ENCODE measurements at regions of chr3 and their contacts with region 1.

Region 1: DNA sequence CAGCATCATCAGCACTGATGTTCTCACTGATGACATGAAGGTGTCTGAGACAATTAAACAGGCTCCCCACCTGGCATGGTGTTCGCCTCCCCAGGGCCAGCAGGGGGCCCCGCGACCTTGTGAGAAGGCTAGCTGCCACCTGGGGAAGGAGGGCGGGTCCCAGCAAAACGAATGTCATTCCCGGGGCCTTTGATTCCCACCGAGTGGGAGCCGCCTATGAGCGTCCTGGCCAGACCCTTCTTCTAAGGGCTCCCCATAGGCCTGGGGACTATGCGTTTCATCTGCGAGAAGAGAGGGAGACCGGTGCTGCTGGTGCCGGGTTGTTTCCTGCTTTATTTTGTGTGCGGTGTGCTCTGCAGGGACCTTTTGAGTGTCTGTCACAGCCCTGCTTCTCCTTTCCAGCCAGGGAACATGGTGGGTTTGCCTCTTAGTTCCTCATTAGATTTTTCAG is 20.5 kb upstream of the MINDY4B start:
- DNase-seq: peak; percentile 65 to 79
- H3K4me3 ChIP-seq: no peak overlapping the region
- H3K4me3 Mint-ChIP-seq: peak overlapping the region; percentile 24
- H3K27ac Mint-ChIP-seq: no peak overlapping the region
- H3K4me1 ChIP-seq: no peaks in the 10 kb centered on the region
- H3K4me1 Mint-ChIP-seq: peaks cover 6% of the 10 kb centered on the region
- H3K27me3 ChIP-seq: no peaks in the 10 kb centered on the region
- H3K27me3 Mint-ChIP-seq: peaks cover 14% of the 10 kb centered on the region
- CTCF ChIP-seq: peak; percentile 80 to 86

Region 2: GRCh38 chr3:150870396-150870795 is 55.4 kb before region 1 on chr3:
- CTCF ChIA-PET with region 1: no interaction called
- POLR2A ChIA-PET with region 1: no interaction called
- intact Hi-C with region 1: no loop called
- DNase-seq: no peak
- H3K4me3 ChIP-seq: no peak overlapping the region
- H3K4me3 Mint-ChIP-seq: no peak overlapping the region
- H3K27ac Mint-ChIP-seq: no peak overlapping the region
- H3K4me1 ChIP-seq: no peaks in the 10 kb centered on the region
- H3K4me1 Mint-ChIP-seq: no peaks in the 10 kb centered on the region
- H3K27me3 ChIP-seq: no peaks in the 10 kb centered on the region
- H3K27me3 Mint-ChIP-seq: peaks cover 11% of the 10 kb centered on the region
- CTCF ChIP-seq: no peak

Region 3: DNA sequence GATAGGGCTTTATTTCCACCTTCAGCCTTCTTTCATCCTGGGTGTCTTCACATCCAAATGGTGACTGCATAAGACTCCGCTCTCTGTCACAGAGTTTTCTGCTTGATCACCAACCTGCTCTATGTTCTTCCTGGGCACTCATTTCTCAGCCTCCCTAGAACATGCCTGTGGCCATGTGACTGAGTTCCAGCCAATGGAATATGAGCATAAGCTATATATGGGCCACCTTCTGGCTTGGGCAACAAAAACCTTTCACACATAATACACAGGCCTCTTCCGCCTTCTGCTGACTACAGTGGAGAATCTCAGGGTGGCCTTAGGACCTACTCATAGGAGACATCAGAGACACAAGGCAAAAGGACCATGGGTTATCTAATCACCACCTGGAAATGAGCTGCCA is 108.5 kb after region 1 on chr3:
- CTCF ChIA-PET with region 1: interaction called, 4 read pairs
- POLR2A ChIA-PET with region 1: no interaction called
- intact Hi-C with region 1: loop called (anchors 5 kb)
- DNase-seq: peak in 1 of 2 experiments; percentile 23
- H3K4me3 ChIP-seq: no peak overlapping the region
- H3K4me3 Mint-ChIP-seq: no peak overlapping the region
- H3K27ac Mint-ChIP-seq: no peak overlapping the region
- H3K4me1 ChIP-seq: no peaks in the 10 kb centered on the region
- H3K4me1 Mint-ChIP-seq: no peaks in the 10 kb centered on the region
- H3K27me3 ChIP-seq: no peaks in the 10 kb centered on the region
- H3K27me3 Mint-ChIP-seq: no peaks in the 10 kb centered on the region
- CTCF ChIP-seq: peak in 1 of 2 experiments; percentile 13

Region 4: DNA sequence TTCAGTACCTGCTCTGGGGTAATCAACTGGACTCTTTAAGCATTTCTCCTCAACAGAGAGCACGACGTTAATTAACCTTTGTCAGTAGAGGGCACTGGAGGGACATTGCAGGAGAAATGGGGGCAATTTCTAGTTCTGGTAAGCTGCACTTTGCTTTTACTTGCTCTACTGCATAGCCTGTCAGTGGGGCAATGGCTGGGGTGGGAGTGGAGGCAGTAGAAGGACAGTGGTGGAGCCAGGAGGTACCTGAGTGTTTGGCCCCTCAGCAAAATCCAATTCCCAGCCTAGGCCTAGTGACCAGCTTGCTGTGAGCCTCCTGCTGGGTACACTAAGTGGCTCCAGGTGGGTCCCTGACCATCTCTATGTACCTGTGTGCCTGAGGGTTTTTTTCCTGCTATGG is 141.4 kb after region 1 on chr3:
- CTCF ChIA-PET with region 1: no interaction called
- POLR2A ChIA-PET with region 1: no interaction called
- intact Hi-C with region 1: loop called (anchors 1 kb)
- DNase-seq: peak; percentile 42 to 63
- H3K4me3 ChIP-seq: no peak overlapping the region
- H3K4me3 Mint-ChIP-seq: no peak overlapping the region
- H3K27ac Mint-ChIP-seq: no peak overlapping the region
- H3K4me1 ChIP-seq: no peaks in the 10 kb centered on the region
- H3K4me1 Mint-ChIP-seq: no peaks in the 10 kb centered on the region
- H3K27me3 ChIP-seq: no peaks in the 10 kb centered on the region
- H3K27me3 Mint-ChIP-seq: peaks cover 3% of the 10 kb centered on the region
- CTCF ChIP-seq: peak; percentile 55 to 57